H1 (cell line): ENCODE measurements at regions of chr6 and their contacts with region 1.

Region 1: DNA sequence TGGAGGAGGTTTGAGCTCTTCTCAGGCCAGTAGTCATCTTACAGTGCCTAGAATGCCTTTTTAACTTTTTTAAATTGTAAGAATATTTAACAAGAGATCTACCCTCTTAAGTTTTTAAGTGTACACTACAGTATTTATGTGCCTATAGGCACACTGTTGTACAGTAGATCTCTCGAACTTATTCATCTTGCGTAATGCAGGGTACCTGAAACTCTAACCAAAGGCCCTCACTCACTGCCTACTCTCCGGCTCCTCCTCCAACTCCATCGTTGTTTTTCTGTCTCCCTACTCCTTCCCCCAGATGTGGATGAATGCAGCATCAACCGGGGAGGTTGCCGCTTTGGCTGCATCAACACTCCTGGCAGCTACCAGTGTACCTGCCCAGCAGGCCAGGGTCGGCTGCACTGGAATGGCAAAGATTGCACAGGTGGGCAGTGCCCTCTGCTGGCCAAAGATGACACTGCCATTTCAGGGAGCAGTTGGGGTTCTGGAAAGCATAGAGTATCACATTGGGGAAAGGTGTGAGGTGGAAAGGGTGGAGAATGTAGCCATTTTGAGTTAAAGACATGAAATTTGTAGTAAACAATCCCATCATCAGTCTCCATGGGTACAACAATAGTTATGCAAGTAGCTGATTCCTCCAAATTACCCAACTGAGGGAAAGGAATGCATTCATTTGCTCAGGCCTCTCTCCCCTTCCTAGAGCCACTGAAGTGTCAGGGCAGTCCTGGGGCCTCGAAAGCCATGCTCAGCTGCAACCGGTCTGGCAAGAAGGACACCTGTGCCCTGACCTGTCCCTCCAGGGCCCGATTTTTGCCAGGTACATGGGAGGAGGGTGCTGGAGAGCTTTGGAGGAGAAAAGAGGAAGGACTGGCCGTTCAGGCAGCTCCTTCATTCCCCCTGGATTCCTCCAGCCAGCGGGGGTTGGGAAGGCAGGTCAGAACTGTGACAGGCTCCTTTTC is 18.4 kb upstream of the ZNF76 start:
- DNase-seq: peak; percentile 64 to 97
- H3K4me3 ChIP-seq: no peak overlapping the region
- H3K27ac ChIP-seq: no peak overlapping the region
- H3K4me1 ChIP-seq: peaks cover 11 to 40% (median 21%) of the 10 kb centered on the region in 4 experiments
- H3K27me3 ChIP-seq: peaks cover 2 to 28% (median 22%) of the 10 kb centered on the region in 4 experiments
- CTCF ChIP-seq: peak; percentile 93 to 97 (median 95)
- EP300 ChIP-seq: no peak
- POLR2A ChIP-seq: no peak
- RAD21 ChIP-seq: peak; percentile 99

Region 2: DNA sequence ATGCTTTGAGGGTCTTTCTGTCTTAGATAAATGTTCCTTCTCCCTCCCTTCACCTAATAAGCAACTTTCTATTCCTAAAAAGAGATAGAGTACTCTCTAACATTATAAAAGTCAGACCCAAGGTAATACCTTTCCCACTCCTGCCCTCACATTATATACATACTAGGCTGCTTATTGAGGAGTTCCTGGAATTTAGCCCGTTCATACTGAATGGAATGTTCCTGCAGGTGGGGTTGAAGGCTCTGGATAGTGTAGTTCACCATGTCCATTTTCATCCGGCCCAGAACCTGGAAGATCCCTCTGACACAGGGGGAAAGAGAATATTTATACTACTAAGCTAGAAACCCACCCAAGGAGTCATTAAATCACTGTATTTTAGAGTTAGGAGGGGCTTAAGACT is 120.4 kb before region 1 on chr6:
- CTCF ChIA-PET with region 1: interaction called, 10 read pairs
- POLR2A ChIA-PET with region 1: no interaction called
- DNase-seq: no peak
- H3K4me3 ChIP-seq: no peak overlapping the region
- H3K27ac ChIP-seq: no peak overlapping the region
- H3K4me1 ChIP-seq: no peaks in the 10 kb centered on the region
- H3K27me3 ChIP-seq: no peaks in the 10 kb centered on the region
- CTCF ChIP-seq: no peak
- EP300 ChIP-seq: no peak
- POLR2A ChIP-seq: no peak
- RAD21 ChIP-seq: no peak

Region 3: DNA sequence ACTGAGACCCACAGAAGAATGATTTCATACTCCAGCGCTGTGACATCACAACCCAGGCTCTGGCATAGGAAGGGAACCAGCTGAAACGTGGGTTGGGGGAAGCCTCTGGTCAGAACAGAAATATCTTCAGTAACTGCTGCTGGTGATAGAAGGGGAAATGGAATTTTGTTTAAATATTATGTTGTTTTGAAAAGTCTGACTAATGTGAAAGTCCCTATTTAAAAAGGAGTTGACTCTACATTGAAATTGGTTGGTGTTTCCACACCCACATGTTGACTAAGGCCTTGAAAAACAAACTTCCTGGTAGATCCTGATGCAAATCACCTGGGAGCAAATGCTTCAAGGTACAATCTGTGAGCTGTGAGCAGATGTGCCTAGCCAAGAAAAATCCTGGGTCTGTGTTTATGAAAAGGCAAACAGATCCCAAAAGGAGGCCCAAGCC is 75.5 kb before region 1 on chr6:
- CTCF ChIA-PET with region 1: interaction called, 12 read pairs
- POLR2A ChIA-PET with region 1: no interaction called
- DNase-seq: no peak
- H3K4me3 ChIP-seq: no peak overlapping the region
- H3K27ac ChIP-seq: no peak overlapping the region
- H3K4me1 ChIP-seq: no peaks in the 10 kb centered on the region
- H3K27me3 ChIP-seq: peaks cover 0 to 2% (median under 1%) of the 10 kb centered on the region in 4 experiments; a peak in 4 of 7 replicates
- CTCF ChIP-seq: no peak
- EP300 ChIP-seq: no peak
- POLR2A ChIP-seq: no peak
- RAD21 ChIP-seq: no peak

Region 4: GRCh38 chr6:35195120-35195780 is 45.9 kb before region 1 on chr6:
- CTCF ChIA-PET with region 1: interaction called, 143 read pairs
- POLR2A ChIA-PET with region 1: no interaction called
- DNase-seq: no peak
- H3K4me3 ChIP-seq: no peak overlapping the region
- H3K27ac ChIP-seq: no peak overlapping the region
- H3K4me1 ChIP-seq: peaks cover 0 to 10% (median 2%) of the 10 kb centered on the region in 4 experiments; a peak in 3 of 7 replicates
- H3K27me3 ChIP-seq: no peaks in the 10 kb centered on the region; a peak in 2 of 7 replicates
- CTCF ChIP-seq: no peak
- EP300 ChIP-seq: no peak
- POLR2A ChIP-seq: no peak
- RAD21 ChIP-seq: 0 out of 4 replicates have a peak, but pooled peaks of 1 of the 2 experiments have one; percentile 1

Region 5: DNA sequence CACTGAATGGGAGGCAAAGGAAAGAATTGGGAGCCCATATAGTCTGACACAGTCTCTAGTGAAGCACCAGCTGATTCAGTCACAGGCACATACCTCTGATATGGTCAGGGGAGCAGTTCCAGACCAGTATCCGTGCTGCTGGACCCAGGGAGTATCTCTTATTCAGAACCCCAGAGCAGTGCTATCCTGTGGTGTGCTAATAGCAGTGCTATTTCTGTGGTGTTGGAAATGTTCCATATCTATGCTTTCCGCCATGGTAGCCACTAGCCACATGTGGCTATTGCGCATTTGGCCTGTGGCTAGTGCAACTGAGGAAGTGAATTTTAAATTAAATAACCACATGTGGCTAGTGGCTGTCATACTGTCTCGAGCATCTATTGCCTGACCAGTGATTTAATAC is 16.4 kb before region 1 on chr6:
- CTCF ChIA-PET with region 1: interaction called, 59 read pairs
- POLR2A ChIA-PET with region 1: interaction called, 5 read pairs
- DNase-seq: no peak
- H3K4me3 ChIP-seq: no peak overlapping the region
- H3K27ac ChIP-seq: no peak overlapping the region
- H3K4me1 ChIP-seq: peaks cover 0 to 2% (median 0%) of the 10 kb centered on the region in 4 experiments; a peak in 1 of 7 replicates
- H3K27me3 ChIP-seq: peaks cover 0 to 18% (median 9%) of the 10 kb centered on the region in 4 experiments; a peak in 5 of 7 replicates
- CTCF ChIP-seq: no peak
- EP300 ChIP-seq: no peak
- POLR2A ChIP-seq: no peak
- RAD21 ChIP-seq: no peak

Region 6: DNA sequence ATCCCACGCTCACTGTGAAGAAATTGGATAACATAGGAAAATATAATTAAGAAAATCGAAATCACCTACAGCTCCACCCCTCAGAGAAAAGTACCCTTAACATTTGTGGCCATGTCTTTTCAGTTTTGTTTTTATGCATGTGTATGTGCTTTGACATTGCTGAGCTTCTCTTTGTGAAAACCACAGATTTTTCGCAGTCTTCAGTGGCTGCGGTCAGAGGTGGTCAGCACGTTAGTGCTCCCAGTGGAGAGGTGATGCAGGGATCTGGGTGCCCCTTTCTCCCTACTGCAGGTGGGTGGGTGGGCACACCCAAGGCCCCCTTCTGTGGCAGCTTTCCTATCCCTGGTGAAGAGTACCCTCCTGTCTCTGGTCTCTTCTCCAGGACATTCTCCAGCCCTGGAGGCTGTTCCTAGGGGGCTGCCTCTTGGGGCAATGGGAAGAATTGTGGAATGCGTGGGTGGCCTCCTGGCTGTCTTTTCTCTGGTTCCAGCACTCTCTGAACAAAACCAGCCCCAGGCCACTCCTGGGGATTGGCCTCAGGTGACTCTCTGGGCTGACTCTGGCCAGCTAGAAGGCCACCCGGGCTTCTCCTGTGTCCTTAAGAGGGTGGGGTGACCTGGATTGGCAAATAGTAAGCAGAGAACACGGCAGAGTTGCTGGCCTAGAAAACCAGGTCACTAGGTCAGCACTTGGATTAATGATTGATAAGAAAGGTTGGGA is 161.2 kb after region 1 on chr6:
- CTCF ChIA-PET with region 1: no interaction called
- POLR2A ChIA-PET with region 1: no interaction called
- DNase-seq: no peak
- H3K4me3 ChIP-seq: no peak overlapping the region
- H3K27ac ChIP-seq: no peak overlapping the region
- H3K4me1 ChIP-seq: peaks cover 0 to 8% (median 0%) of the 10 kb centered on the region in 4 experiments; a peak in 2 of 7 replicates
- H3K27me3 ChIP-seq: no peaks in the 10 kb centered on the region
- CTCF ChIP-seq: no peak
- EP300 ChIP-seq: no peak
- POLR2A ChIP-seq: no peak
- RAD21 ChIP-seq: no peak

Region 7: DNA sequence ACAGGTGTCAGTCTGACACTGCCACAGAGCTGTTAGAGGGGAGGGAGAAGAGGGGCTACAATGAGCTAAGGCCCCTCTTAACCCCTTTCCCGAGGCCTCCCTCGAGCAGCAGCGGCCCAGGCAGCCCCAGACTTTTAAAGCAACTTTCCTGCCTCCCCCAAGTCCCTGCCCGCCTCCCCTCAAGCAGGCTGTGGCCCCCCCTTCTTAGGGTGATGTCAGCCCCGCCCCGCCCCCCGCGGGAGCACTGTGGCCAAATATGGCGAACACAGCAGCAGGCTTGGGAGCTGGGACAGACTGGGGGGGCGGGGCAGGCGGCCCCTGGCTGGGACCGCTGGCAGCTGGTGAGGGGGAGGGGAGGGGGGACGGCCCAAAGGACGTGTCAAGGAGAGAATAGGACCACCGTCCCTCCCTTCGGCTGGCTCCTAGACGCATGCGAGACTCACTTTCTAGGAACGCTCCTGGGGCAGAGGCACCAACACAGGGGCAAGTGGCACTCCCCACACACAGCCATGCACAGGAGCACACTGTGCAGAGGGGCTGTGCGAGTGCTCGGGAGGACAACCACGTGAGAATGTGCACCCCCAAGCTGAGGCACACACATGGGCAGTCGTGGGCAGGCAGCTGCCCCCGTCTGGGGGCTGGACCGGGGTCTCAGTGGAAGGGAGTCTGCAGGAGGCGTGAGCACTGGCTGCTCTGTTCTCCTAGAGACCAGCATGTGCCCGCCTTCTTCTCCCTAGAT is 249.0 kb after region 1 on chr6:
- CTCF ChIA-PET with region 1: no interaction called
- POLR2A ChIA-PET with region 1: no interaction called
- DNase-seq: peak in 1 of 2 experiments; percentile 84
- H3K4me3 ChIP-seq: peak overlapping the region; percentile 21 to 56 (median 44); a peak in 7 of 8 replicates
- H3K27ac ChIP-seq: peak overlapping the region; percentile 43; the same call in 1 of the 2 replicates
- H3K4me1 ChIP-seq: peaks cover 31 to 83% (median 70%) of the 10 kb centered on the region in 4 experiments
- H3K27me3 ChIP-seq: no peaks in the 10 kb centered on the region
- CTCF ChIP-seq: no peak
- EP300 ChIP-seq: peak in 1 of 2 experiments; percentile 80; a peak in 1 of 3 replicates
- POLR2A ChIP-seq: no peak; a peak in 1 of 3 replicates
- RAD21 ChIP-seq: no peak